WTC11 (cell line): ENCODE measurements at regions of chr12 and their contacts with region 1.

Region 1: GRCh38 chr12:98227162-98227561 is 288.2 kb upstream of the TMPO start:
- DNase-seq: peak; percentile 23
- ATAC-seq: peak; percentile 77
- H3K4me3 Mint-ChIP-seq: no peak overlapping the region
- H3K27ac Mint-ChIP-seq: no peak overlapping the region
- H3K4me1 Mint-ChIP-seq: peaks cover 5% of the 10 kb centered on the region
- H3K27me3 Mint-ChIP-seq: no peaks in the 10 kb centered on the region
- CTCF ChIP-seq: peak; percentile 81

Region 2: GRCh38 chr12:98179151-98179550 is 48.0 kb before region 1 on chr12:
- CTCF ChIA-PET with region 1: no interaction called
- POLR2A ChIA-PET with region 1: no interaction called
- DNase-seq: no peak
- ATAC-seq: no peak
- H3K4me3 Mint-ChIP-seq: no peak overlapping the region
- H3K27ac Mint-ChIP-seq: no peak overlapping the region
- H3K4me1 Mint-ChIP-seq: peaks cover 6% of the 10 kb centered on the region; the same call in 1 of the 2 replicates
- H3K27me3 Mint-ChIP-seq: no peaks in the 10 kb centered on the region
- CTCF ChIP-seq: no peak

Region 3: DNA sequence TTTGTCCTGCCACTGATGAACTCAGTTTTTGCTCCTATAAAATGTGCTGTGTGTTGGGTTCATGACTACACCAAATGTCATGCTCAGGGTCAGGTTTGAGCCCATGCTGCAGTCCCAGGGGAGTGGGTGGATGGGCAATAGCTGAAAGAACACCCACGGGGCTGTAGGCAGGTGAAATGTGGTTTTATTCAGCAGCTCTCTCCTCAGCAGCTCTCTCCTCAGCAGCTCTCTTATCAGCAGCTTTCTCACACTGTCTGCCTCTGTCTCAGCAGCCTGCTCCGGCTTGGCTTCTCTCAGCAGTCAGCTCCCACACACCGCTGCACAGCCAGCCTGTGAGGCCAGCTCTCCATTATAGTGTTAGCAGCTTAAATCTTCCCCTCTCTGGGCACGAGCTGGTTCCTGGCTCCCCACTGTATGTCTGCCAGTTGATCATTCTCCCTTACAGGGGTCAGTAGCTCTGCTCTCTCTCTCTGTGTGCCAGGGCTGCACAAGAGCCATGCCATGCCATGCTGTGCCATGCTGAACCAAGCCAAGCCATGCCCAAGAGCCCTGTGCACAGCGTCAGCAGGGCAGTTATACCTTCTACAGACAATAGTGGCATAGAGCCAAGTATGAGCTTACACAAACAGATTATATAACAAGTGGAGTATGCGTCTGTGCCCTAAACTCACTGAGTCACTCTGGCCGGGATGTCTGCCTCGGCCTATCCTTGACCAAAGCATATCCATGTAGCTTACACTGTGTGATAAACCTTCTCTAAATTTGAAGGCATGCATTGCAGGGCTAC is 15.1 kb before region 1 on chr12:
- CTCF ChIA-PET with region 1: interaction called, 25 read pairs
- POLR2A ChIA-PET with region 1: no interaction called
- DNase-seq: no peak
- ATAC-seq: no peak
- H3K4me3 Mint-ChIP-seq: no peak overlapping the region
- H3K27ac Mint-ChIP-seq: no peak overlapping the region
- H3K4me1 Mint-ChIP-seq: peaks cover 23% of the 10 kb centered on the region
- H3K27me3 Mint-ChIP-seq: no peaks in the 10 kb centered on the region; the same call in none of the 2 replicates
- CTCF ChIP-seq: no peak

Region 4: DNA sequence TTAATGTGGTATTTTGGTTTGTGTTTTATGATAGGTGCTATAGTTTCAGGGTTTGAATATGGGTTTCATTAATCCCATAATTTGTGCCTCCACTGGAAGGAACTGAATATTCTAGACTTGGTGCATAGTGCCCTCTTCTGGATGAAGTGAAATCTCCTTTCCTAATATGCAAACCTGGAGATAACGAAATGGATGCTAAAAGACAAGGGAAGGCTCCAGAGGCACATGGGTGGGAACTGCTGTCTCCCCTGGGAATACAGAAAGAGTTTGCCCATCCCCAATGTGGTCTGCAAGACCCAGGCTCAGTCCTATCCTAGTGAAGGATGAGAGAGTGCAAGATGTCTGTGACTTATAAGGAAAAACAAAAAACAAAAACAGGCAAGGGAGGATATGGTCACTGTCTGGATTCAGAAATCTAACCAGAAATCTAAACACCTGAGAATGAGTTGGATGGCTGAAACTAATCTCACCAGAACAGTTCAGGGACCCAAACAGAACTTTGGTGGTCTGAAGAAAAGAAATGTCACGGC is 145.9 kb after region 1 on chr12:
- CTCF ChIA-PET with region 1: interaction called, 16 read pairs
- POLR2A ChIA-PET with region 1: no interaction called
- DNase-seq: no peak
- ATAC-seq: peak; percentile 76
- H3K4me3 Mint-ChIP-seq: no peak overlapping the region
- H3K27ac Mint-ChIP-seq: no peak overlapping the region
- H3K4me1 Mint-ChIP-seq: peaks cover 20% of the 10 kb centered on the region
- H3K27me3 Mint-ChIP-seq: no peaks in the 10 kb centered on the region
- CTCF ChIP-seq: peak; percentile 32; the same call in 1 of the 2 replicates

Region 5: GRCh38 chr12:98397316-98398105 is 170.3 kb after region 1 on chr12:
- CTCF ChIA-PET with region 1: interaction called, 31 read pairs
- POLR2A ChIA-PET with region 1: no interaction called
- DNase-seq: peak; percentile 88
- ATAC-seq: peak; percentile 92
- H3K4me3 Mint-ChIP-seq: peak overlapping the region; percentile 67
- H3K27ac Mint-ChIP-seq: peak overlapping the region; percentile 54; the same call in 1 of the 2 replicates
- H3K4me1 Mint-ChIP-seq: peaks cover 47% of the 10 kb centered on the region
- H3K27me3 Mint-ChIP-seq: no peaks in the 10 kb centered on the region
- CTCF ChIP-seq: peak; percentile 82